Heart right ventricle (tissue), 16 donors: ENCODE measurements at regions of chr11 and their contacts with region 1.

Region 1: DNA sequence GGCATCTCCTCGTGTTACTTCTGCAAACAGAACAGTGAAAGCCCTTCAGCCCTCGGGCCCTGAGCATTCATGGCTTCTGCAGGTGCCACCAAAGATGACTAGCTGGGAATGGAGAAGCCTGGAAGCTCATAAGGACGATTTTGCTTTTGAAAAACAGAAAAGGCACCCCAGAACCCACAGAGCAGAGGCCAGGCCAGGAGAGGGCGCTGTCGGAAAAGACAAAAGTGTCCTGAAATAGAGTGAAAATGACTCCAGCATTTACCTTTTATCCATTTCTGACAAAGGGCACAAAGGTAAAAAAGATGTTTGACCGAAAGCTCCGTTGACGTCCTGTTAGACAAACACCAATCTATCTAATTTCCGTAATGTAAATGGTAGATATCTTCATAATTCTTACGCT is 37.6 kb downstream of the ZNF195 start:
- DNase-seq: peak in 1 of 2 donors; percentile 39
- ATAC-seq: no peak
- H3K4me3 ChIP-seq: no peak overlapping the region
- H3K27ac ChIP-seq: no peak overlapping the region
- H3K4me1 ChIP-seq: no peaks in the 10 kb centered on the region
- H3K27me3 ChIP-seq: peaks cover 0 to 49% (median 19%) of the 10 kb centered on the region in 7 donors
- CTCF ChIP-seq: peak; percentile 8 to 72 (median 64)

Region 2: GRCh38 chr11:2498750-2499149 is 842.5 kb before region 1 on chr11:
- intact Hi-C with region 1: no loop called
- DNase-seq: no peak
- ATAC-seq: no peak
- H3K4me3 ChIP-seq: no peak overlapping the region
- H3K27ac ChIP-seq: no peak overlapping the region
- H3K4me1 ChIP-seq: no peaks in the 10 kb centered on the region
- H3K27me3 ChIP-seq: no peaks in the 10 kb centered on the region
- CTCF ChIP-seq: no peak

Region 3: GRCh38 chr11:3412837-3413236 is 71.5 kb after region 1 on chr11:
- intact Hi-C with region 1: loop called in 5 of 10 experiments (anchors 5 to 10 kb)
- DNase-seq: no peak
- ATAC-seq: no peak
- H3K4me3 ChIP-seq: no peak overlapping the region
- H3K27ac ChIP-seq: no peak overlapping the region
- H3K4me1 ChIP-seq: peaks cover 0 to 6% (median 0%) of the 10 kb centered on the region in 9 donors
- H3K27me3 ChIP-seq: no peaks in the 10 kb centered on the region
- CTCF ChIP-seq: no peak